ENCODE measurements at regions of chr16 and their contacts with region 1.

Region 1: DNA sequence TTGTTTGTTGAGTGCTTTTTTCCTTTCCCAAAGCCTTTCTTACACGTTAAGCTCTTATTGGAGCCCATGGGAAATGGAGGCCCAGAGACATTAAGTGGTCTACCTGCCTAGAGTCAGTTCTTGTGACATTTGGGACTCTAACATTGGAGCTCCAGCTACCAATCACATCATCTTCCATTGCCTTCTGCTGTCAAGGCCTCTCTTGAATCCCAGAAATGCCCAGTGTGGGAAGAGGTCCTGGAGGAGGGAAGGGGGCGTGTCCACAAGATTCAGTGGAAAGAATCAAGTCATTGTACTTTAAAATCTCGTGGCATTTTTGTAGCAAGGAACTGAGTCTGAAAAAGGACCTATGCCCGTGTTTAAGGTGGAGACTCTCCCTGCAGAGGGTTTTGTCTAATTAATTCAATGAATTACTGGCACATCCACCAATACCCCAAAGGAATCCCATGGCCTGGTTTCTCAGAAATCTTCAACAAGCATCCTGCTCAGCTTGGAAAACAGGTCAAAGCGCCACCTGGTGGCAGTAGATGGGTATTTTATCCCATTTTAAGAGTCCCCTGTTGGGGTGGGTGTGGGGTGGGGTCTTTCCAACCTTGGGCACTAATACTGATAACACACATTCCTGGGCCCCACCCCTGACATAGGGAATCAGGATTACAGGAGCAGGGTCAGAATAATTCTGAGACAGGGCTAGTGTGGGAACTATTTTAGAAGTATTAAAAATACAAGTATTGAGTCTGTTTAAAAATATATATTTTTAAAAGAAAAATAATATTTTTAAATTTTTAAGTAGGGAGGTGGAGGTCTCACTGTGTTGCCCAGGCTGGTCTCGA is 24.6 kb downstream of the GPT2 start:
- DNase-seq: peak in 1 of 2 donors; percentile 56
- ATAC-seq: peak; percentile 52

Region 2: GRCh38 chr16:46853713-46854443 is 54.9 kb before region 1 on chr16:
- intact Hi-C with region 1: loop called (anchors 2 to 10 kb)
- DNase-seq: peak; percentile 65 to 83
- ATAC-seq: peak; percentile 69

Region 3: DNA sequence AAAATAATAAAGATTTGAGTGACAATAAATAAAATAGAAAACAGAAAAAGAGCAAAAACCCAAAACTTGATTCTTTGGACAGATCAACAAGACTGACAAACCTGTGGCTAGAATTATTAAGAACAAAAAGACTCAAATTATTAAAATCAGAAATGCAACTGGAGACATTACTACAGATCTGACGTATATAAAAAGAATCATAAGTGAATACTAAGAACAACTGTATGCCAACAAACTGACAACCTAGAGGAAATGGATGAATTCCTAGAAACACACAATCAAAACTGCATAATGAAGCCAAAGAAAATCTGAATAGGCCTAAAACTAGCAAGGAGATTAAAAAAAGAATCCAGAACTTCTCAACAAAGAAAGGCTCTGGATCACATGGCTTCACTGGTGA is 187.5 kb after region 1 on chr16:
- intact Hi-C with region 1: no loop called
- DNase-seq: no peak
- ATAC-seq: no peak

Measured in left colon (tissue), 2 donors.